ENCODE measurements at regions of chr4 and their contacts with region 1.

Region 1: DNA sequence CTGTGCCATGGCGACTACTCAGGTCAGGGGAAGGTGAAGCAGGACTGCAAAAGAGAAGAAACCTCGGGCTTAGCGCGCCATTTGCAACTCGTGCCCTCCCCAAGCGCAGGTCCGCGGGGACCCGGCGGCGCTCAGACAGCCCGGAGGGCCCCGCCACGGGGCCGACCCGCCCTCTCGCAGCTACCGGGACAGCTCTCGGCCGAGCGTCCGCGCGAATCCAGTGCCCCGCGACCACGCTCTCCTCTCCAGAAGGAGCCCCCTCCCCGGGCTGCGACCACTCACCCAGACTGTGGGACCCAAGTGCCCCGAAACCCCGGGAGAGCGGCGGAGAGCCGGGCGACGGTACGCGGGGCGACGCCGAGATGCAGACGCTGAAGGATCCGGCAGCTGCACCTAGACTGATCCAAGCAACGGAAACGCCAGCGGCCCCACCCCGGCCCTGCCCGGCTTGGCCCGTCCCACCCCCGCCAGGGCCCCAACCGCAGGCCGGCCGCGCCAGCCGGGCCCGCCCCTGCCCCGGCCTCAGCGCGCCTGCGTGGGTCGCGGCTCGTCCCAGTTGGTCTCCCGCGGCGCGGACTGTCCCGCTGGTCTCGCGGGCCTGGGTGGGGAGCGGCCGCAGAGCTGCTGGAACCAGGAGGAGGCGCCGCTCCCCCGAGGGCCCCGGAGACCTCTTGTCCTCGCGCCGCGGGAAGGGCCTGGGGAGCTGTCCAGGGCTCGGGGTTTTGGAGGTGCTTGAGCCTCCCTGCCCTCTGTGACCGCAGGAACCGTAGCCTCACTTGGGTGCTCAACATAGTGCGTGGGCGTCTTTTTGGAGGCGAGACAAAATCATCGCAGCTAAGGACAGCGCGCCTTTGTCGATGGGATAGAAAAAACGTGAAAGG is at the start of gene ANXA5:
- DNase-seq: peak; percentile 76
- ATAC-seq: peak; percentile 92
- H3K4me3 Mint-ChIP-seq: peak within 1 kb of the TSS; percentile 94
- H3K27ac Mint-ChIP-seq: peak within 1 kb of the TSS; percentile 90
- H3K4me1 Mint-ChIP-seq: peaks cover 34% of the 10 kb centered on the region
- H3K27me3 Mint-ChIP-seq: no peaks in the 10 kb centered on the region
- CTCF ChIP-seq: no peak
- total RNA-seq, gene ANXA5: 86.8 and 89.9 TPM in 2 replicates

Region 2: DNA sequence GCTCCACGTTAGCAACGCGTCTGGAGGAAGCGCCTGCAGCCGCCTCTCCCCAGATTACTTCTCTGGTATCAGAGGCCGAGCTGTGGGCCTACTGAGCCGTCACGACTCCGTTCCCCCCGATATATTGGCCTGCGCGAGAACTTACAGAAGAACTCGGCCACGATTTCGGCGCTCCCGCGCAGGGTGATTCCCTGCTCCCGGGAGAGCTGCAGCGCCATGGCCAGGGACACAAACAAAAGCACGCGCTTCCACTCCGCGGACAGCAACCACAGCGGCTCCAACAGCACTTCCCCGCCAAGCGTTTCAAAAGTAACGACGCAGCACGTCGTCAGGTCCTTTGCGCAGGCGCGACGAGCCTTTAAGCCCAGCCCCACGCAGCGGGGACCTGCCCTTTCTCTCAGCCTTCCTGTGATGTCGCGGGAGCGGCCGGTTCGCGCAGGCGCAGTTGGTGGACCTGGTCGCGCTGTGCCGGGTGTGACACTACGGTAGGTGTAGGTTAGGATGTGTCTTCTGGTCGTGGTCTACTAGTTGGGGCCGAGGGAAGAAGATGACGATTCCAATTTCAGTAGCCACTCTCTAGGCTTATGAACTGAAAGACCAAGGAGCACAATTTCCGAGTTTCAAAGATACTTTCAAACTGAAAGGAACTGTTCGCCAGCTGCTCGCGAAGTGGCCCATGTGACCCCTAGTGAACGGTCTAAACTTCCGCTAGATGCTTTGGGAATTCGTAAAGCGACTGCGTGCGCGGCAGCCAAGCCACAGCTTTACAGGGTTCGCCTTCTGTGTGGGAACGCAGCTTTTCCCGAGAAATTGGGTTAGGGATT is 1630.1 kb before region 1 on chr4 and contains the start of gene MAD2L1:
- CTCF ChIA-PET with region 1: no interaction called
- POLR2A ChIA-PET with region 1: interaction called, 3 read pairs
- intact Hi-C with region 1: loop called (anchors 1 kb)
- DNase-seq: peak; percentile 95
- ATAC-seq: peak; percentile 94
- H3K4me3 Mint-ChIP-seq: peak within 1 kb of the TSS; percentile 99
- H3K27ac Mint-ChIP-seq: peak within 1 kb of the TSS; percentile 97
- H3K4me1 Mint-ChIP-seq: peaks cover 31% of the 10 kb centered on the region
- H3K27me3 Mint-ChIP-seq: no peaks in the 10 kb centered on the region
- CTCF ChIP-seq: no peak
- total RNA-seq, gene MAD2L1: 3.4 and 5.4 TPM in 2 replicates

Region 3: GRCh38 chr4:121648516-121648915 is 48.3 kb before region 1 on chr4:
- CTCF ChIA-PET with region 1: no interaction called
- POLR2A ChIA-PET with region 1: no interaction called
- intact Hi-C with region 1: no loop called
- DNase-seq: no peak
- ATAC-seq: no peak
- H3K4me3 Mint-ChIP-seq: no peak overlapping the region
- H3K27ac Mint-ChIP-seq: no peak overlapping the region
- H3K4me1 Mint-ChIP-seq: no peaks in the 10 kb centered on the region
- H3K27me3 Mint-ChIP-seq: peaks cover 6% of the 10 kb centered on the region
- CTCF ChIP-seq: no peak

Region 4: DNA sequence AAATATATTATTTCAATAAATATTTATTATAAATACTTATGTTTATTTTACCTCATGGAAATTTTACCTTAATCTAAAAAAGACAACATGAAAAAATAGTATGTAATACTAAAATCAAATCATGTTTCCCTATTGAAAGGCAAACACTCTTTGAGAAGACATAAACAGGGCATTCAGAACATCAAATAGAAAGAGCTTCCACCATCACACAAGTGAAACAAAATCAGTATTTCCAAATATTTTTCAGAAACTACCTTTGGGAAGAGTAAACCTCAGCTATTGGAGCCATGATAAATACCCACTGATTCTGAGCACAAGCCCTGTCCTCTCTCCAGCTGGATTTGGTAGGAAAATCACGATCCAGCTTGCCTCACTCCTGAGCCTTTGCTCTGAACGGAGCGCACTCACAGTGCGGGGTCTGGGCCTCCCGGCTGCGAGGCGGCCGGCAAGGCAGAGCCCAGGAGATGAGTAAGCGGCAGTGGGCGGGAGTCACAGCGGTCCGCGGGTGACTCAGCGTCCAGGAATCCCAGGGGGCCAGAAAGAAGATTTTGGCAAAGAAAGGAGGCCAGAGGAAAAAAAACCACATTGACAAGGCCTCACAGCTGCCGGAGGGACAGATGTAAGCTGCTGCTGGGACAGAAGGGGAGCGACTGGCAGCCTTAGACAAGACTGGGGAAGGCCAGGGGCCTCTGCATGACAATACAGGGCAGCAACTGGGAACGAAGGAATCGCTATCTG is 14.6 kb after region 1 on chr4:
- CTCF ChIA-PET with region 1: interaction called, 4 read pairs
- POLR2A ChIA-PET with region 1: interaction called, 3 read pairs
- intact Hi-C with region 1: loop called (anchors 1 kb)
- DNase-seq: peak; percentile 18
- ATAC-seq: peak; percentile 88
- H3K4me3 Mint-ChIP-seq: no peak overlapping the region
- H3K27ac Mint-ChIP-seq: no peak overlapping the region
- H3K4me1 Mint-ChIP-seq: peaks cover 6% of the 10 kb centered on the region
- H3K27me3 Mint-ChIP-seq: peaks cover 53% of the 10 kb centered on the region
- CTCF ChIP-seq: no peak

Region 5: DNA sequence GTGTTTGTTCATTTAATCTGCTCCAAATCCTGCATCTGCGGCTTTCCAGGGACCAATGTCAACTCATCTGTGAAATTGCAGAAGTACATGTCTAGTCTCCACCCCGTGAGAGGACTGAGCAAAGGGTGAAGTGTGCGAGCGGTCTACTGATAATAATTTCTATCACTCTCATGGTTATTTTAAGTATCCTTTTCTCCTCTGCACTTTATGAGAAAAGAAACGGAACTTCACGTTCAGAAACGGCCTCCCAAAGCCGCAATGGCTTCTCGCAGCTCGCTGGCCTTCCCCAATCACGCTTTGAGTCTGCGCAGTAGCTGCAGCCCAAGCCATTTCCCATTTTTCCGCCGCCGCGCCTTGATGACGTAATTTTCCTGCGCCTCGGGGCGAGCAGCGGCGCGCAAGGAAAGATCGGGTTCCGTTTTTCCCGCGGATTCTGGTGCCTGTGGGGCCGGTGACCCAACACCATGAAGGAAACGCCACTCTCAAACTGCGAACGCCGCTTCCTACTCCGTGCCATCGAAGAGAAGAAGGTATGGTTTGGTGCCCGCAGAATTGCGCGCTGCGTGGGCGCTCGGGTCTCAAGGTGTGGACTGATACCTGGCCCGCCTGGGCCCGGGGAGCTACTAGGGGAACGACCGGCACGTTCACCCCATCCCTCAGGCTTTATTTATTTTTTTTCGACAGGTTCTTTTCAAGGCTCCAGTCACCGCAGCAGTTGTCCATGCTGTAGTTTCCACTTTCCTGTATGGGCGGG is 104.3 kb after region 1 on chr4 and contains the start of gene EXOSC9:
- CTCF ChIA-PET with region 1: interaction called, 3 read pairs
- POLR2A ChIA-PET with region 1: interaction called, 16 read pairs
- intact Hi-C with region 1: loop called (anchors 1 kb)
- DNase-seq: peak; percentile 94
- ATAC-seq: peak; percentile 81
- H3K4me3 Mint-ChIP-seq: peak within 1 kb of the TSS; percentile 96
- H3K27ac Mint-ChIP-seq: peak within 1 kb of the TSS; percentile 100
- H3K4me1 Mint-ChIP-seq: peaks cover 31% of the 10 kb centered on the region
- H3K27me3 Mint-ChIP-seq: no peaks in the 10 kb centered on the region
- CTCF ChIP-seq: no peak
- total RNA-seq, gene EXOSC9: 37.5 and 39.1 TPM in 2 replicates

Region 6: DNA sequence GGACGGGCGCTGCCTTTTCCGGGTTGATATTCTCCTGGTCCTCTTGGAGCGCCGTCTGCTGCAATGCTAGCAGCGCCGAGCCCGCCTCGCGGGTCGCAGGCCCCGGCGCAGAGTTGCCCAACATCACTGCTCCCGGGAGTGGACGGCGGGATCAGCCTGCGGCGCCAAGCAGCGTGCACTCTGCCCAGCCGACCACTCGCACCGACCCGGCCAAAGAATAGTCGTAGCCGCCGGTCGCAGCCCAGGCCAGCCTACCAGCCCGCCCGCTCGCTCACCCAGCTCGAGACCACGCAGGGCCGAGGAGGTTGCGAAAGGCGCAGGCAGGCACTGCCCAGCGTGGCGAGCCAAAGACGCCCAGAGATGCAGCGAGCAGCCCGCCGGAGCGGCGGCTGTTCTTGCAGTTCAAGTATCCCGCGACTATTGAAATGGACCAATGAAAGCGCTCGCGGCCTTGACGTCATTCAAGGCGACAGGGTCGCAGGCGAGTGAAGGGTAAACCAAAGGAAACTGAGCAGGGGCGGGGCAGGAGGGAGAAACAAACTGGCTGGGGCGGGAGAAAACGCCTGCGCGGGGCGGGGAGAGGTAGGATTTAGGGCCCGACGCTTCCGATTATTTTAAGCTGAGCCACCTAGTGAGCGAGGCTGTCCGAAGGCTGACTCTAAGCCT is 126.8 kb after region 1 on chr4 and contains the start of gene CCNA2:
- CTCF ChIA-PET with region 1: no interaction called
- POLR2A ChIA-PET with region 1: no interaction called
- intact Hi-C with region 1: loop called (anchors 1 kb)
- DNase-seq: peak; percentile 86
- ATAC-seq: peak; percentile 99
- H3K4me3 Mint-ChIP-seq: peak within 1 kb of the TSS; percentile 87
- H3K27ac Mint-ChIP-seq: peak within 1 kb of the TSS; percentile 82
- H3K4me1 Mint-ChIP-seq: peaks cover 17% of the 10 kb centered on the region
- H3K27me3 Mint-ChIP-seq: no peaks in the 10 kb centered on the region
- CTCF ChIP-seq: no peak
- total RNA-seq, gene CCNA2: 1.4 and 2.0 TPM in 2 replicates

Region 7: DNA sequence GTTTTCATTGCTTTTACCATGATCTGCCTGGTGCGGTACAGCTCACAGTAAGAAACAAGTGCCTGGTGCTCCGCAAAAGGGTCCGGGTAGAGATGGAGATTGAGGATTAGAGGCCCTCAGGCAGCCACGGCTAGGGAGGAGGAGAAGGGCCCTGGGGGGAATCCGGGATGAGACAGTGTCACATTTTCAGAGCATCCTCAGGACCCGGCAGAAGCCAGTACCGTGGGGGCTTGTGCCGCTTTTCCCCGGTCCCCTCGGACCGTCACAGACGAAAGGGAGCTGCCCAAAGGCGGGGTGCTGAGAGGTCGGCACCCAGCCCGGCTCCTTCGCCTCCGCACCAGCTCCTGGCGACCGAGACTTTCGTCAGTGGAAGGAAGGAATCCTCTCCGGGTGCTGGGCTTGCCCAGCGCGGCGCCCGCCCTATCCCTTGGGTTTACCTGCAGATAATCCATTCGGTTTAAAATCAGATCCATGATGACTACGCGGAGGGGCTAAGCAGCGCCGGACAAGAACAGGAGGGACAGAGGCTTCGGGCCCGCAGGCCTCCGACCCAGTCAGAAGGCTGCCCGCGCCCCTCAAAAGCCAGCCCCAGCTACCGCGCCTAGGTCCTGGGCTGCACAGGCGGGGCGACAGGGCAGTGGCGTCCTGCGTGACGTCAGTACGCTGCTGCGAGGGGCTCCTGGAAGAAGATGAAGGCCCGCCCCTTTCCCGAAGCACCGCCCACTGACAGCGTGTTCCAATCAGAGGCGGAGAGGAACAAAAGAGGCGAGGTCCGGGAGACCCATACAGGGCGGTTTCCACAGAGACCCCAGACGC is 173.2 kb after region 1 on chr4 and contains the start of gene BBS7:
- CTCF ChIA-PET with region 1: no interaction called
- POLR2A ChIA-PET with region 1: interaction called, 3 read pairs
- intact Hi-C with region 1: loop called (anchors 2 kb)
- DNase-seq: peak; percentile 96
- ATAC-seq: peak; percentile 99
- H3K4me3 Mint-ChIP-seq: peak within 1 kb of the TSS; percentile 97
- H3K27ac Mint-ChIP-seq: peak within 1 kb of the TSS; percentile 66
- H3K4me1 Mint-ChIP-seq: peaks cover 15% of the 10 kb centered on the region
- H3K27me3 Mint-ChIP-seq: peaks cover 8% of the 10 kb centered on the region
- CTCF ChIP-seq: no peak
- total RNA-seq, gene BBS7: 7.5 and 9.4 TPM in 2 replicates

Region 8: GRCh38 chr4:122151982-122152710 is 455.3 kb after region 1 on chr4 and contains the start of gene BLTP1:
- CTCF ChIA-PET with region 1: no interaction called
- POLR2A ChIA-PET with region 1: no interaction called
- intact Hi-C with region 1: loop called (anchors 5 kb)
- DNase-seq: peak; percentile 85
- ATAC-seq: peak; percentile 95
- H3K4me3 Mint-ChIP-seq: peak within 1 kb of the TSS; percentile 97
- H3K27ac Mint-ChIP-seq: peak within 1 kb of the TSS; percentile 97
- H3K4me1 Mint-ChIP-seq: peaks cover 39% of the 10 kb centered on the region
- H3K27me3 Mint-ChIP-seq: no peaks in the 10 kb centered on the region
- CTCF ChIP-seq: no peak
- total RNA-seq, gene BLTP1: 39.1 and 44.4 TPM in 2 replicates